ENCODE measurements at regions of chr18 and their contacts with region 1.

Region 1: GRCh38 chr18:46677611-46678010 is 20.6 kb upstream of the LOXHD1 start:
- DNase-seq: no peak
- H3K4me3 ChIP-seq: no peak overlapping the region
- H3K27me3 ChIP-seq: no peaks in the 10 kb centered on the region; the same call in 1 of the 2 replicates
- CTCF ChIP-seq: 0 out of 2 replicates have a peak, but pooled peaks have one; percentile 29

Region 2: DNA sequence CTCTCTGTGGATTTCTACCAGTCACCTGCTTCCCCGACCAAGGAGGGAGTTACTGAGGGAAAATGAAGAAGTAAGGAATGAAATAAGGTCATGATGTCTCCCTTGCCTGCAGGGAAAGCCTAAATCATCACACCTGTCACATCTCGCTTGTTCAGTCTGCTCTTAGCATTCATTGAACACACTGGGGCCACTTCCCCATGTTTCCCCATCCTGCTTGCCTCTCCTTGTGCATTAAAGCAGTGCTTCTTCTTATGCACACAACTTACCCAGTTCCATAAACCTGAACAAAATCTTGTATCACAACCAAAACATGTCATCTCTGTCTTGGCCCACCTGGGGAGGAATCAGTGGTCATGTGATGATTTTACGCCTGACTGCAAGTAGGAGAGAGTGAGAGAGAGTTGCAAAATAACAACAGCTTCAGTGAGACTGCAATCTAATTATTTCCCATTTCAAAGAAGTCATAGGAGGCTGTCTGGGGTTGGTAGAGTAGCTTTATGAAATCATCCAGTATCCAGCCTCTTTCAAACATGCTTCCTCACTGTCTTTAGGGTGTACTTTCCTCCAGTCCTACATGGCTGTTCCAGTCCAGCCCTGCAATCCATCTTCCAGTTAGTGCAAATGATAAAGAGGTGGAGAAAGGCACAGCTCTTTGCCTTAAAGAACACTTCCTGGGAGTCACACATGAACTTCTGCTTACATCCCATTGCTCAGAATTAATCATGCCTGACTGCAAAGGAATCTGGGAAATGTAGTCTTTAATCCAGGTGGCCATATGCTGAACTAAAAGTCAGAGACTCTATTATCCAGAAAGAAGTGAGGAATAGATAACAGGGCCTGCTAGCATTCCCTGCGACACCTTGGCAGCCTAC is 353.3 kb before region 1 on chr18:
- CTCF ChIA-PET with region 1: no interaction called
- POLR2A ChIA-PET with region 1: no interaction called
- DNase-seq: peak; percentile 4
- H3K4me3 ChIP-seq: no peak overlapping the region
- H3K27me3 ChIP-seq: peaks cover 3% of the 10 kb centered on the region; the same call in 1 of the 2 replicates
- CTCF ChIP-seq: no peak

Region 3: GRCh38 chr18:46821856-46822711 is 144.5 kb after region 1 on chr18:
- CTCF ChIA-PET with region 1: no interaction called
- POLR2A ChIA-PET with region 1: interaction called, 11 read pairs
- DNase-seq: no peak
- H3K4me3 ChIP-seq: no peak overlapping the region
- H3K27me3 ChIP-seq: no peaks in the 10 kb centered on the region
- CTCF ChIP-seq: no peak

Region 4: DNA sequence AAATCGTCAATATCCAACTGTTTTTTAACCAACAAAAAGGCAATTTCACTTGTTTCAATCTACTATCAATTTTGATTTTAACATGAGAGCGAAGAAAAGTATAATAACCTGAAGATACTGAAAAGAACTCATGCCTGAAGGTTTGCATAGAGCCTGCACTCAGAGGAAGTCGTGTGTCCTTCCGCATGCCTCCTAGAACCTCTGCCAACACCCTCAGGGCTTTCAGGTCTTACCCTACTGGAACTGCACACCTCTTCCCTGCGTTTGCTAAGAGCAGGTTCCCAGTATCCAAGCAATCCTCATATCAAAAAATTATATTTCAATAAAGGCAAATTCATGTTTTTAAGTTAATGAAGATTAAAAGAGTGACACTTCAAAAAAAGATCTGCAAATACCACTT is 165.0 kb after region 1 on chr18:
- CTCF ChIA-PET with region 1: no interaction called
- POLR2A ChIA-PET with region 1: no interaction called
- DNase-seq: no peak
- H3K4me3 ChIP-seq: no peak overlapping the region
- H3K27me3 ChIP-seq: no peaks in the 10 kb centered on the region
- CTCF ChIP-seq: no peak